ENCODE measurements at regions of chr11 and their contacts with region 1.

Region 1: GRCh38 chr11:44977476-44977984 is 26.8 kb upstream of the TP53I11 start:
- DNase-seq: no peak
- ATAC-seq: peak; percentile 63; the same call in 2 of the 3 replicates
- H3K4me3 ChIP-seq: no peak overlapping the region
- H3K27ac ChIP-seq: no peak overlapping the region
- H3K4me1 ChIP-seq: no peaks in the 10 kb centered on the region
- H3K27me3 ChIP-seq: peaks cover 0 to 64% of the 10 kb centered on the region in 2 experiments; a peak in 3 of 5 replicates
- CTCF ChIP-seq: peak in 2 of 3 experiments; percentile 29 to 32; a peak in 1 of 6 replicates
- EP300 ChIP-seq: no peak
- POLR2A ChIP-seq: no peak
- RAD21 ChIP-seq: no peak

Region 2: DNA sequence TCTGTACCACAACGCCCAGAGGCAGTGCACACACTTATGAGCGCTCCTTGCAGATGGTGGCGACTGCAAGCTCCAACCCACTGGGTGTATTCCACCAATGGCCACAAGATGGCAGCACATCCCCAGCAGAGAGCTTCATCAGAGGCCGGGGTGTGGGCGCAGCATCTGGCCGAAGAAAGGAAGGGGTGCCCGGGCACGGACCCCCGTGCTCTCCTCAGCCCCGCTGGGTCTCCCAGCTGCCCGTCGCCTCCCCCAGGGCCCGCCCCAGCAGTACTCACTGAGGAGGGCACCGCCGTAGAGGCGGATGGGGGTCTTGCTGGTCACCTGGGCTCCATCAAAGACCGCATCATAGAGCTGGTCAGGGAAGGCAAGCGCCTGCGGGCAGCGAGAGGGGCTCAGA is 41.0 kb before region 1 on chr11:
- CTCF ChIA-PET with region 1: no interaction called
- POLR2A ChIA-PET with region 1: interaction called, 6 read pairs
- in situ Hi-C with region 1: no loop called
- intact Hi-C with region 1: loop called (anchors 5 kb)
- DNase-seq: peak; percentile 75 to 83 (median 82)
- ATAC-seq: peak; percentile 92
- H3K4me3 ChIP-seq: no peak overlapping the region
- H3K27ac ChIP-seq: no peak overlapping the region
- H3K4me1 ChIP-seq: peaks cover 0 to 11% of the 10 kb centered on the region in 2 experiments; a peak in 1 of 5 replicates
- H3K27me3 ChIP-seq: peaks cover 0 to 23% of the 10 kb centered on the region in 2 experiments; a peak in 2 of 5 replicates
- CTCF ChIP-seq: peak; percentile 85 to 95 (median 91)
- EP300 ChIP-seq: no peak
- POLR2A ChIP-seq: no peak
- RAD21 ChIP-seq: peak; percentile 91 to 93

Region 3: DNA sequence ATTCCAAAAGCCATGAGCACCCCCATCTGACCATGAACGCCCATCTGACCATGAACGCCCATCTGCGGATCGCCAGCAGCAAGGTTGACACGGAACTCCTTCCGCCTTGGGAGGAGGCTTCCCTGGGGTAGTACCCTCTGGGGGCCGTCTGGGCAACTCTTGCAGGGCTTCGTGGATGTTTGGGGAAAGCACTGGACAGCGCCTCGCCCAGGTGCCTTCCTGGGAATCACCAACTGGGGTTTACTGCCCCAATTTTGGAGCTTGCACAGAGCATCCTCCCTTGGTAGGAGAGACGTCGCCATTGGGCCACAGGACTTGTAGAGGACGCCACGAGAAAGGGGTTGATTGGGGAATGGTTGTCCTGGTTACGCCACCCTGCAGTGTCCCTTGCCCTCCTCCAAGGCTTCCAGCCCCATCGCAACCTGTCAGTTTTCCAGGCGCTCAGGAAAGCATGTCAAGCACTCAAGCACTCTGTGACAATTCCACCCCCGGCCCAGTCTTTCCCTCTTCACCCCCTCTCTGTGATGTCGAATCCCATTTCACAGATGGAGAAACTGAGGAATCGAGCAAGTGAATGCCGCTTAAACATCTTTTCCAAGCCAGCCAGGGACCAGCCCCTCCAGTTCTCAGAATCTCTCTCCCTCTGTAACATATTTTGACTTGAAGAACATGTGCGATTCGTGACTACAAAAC is 168.0 kb after region 1 on chr11:
- CTCF ChIA-PET with region 1: no interaction called
- POLR2A ChIA-PET with region 1: no interaction called
- in situ Hi-C with region 1: no loop called
- intact Hi-C with region 1: no loop called
- DNase-seq: peak in 1 of 4 experiments; percentile 25
- ATAC-seq: no peak
- H3K4me3 ChIP-seq: no peak overlapping the region
- H3K27ac ChIP-seq: no peak overlapping the region
- H3K4me1 ChIP-seq: peaks cover 0 to 10% of the 10 kb centered on the region in 2 experiments; a peak in 3 of 5 replicates
- H3K27me3 ChIP-seq: peaks cover 8 to 31% of the 10 kb centered on the region in 2 experiments; a peak in 3 of 5 replicates
- CTCF ChIP-seq: no peak
- EP300 ChIP-seq: no peak
- POLR2A ChIP-seq: no peak
- RAD21 ChIP-seq: no peak

Measured in K562 (cell line).